Heart left ventricle (tissue), 16 donors: ENCODE measurements at regions of chr2 and their contacts with region 1.

Region 1: DNA sequence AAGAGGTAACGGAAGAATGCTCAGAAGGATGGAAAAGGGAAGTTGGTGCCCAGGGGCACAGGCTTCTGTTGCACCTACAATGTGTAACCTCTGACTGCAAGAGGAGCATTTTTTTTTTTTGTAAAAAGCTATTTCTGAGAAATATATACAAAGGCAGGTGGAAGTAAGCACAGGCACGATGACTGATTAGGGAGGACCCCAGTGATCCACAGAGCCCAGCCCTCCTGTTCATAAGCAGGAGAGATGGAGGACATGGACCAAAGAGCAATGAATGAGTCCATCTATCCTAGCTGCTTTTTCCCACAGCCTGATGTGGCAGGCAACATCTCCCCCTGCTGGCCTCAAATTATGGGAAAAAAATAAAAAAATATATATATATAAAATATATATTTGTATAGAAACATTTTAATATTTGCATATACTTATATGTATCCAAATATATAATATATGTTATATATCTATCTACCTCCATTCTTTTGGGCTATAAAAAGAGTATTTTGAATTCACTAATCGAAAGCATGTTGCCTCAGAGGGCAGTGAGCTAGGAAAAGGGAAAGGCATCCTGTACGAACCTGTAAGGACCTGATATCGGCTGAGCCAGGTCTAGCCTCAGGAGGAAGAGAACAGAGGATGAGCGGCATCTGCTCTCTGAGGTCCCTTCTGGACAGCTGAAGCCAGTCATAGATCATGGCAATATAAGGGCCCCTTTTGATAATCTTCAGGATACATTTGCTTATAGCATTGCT is 166.0 kb upstream of the STK17B start:
- DNase-seq: no peak
- ATAC-seq: peak in 1 of 4 donors; percentile 42
- H3K4me3 ChIP-seq: no peak overlapping the region
- H3K27ac ChIP-seq: no peak overlapping the region
- H3K4me1 ChIP-seq: peaks cover 0 to 50% (median 9%) of the 10 kb centered on the region in 12 donors
- H3K27me3 ChIP-seq: no peaks in the 10 kb centered on the region
- CTCF ChIP-seq: peak; percentile 17 to 62 (median 46)
- POLR2A ChIP-seq: no peak

Region 2: DNA sequence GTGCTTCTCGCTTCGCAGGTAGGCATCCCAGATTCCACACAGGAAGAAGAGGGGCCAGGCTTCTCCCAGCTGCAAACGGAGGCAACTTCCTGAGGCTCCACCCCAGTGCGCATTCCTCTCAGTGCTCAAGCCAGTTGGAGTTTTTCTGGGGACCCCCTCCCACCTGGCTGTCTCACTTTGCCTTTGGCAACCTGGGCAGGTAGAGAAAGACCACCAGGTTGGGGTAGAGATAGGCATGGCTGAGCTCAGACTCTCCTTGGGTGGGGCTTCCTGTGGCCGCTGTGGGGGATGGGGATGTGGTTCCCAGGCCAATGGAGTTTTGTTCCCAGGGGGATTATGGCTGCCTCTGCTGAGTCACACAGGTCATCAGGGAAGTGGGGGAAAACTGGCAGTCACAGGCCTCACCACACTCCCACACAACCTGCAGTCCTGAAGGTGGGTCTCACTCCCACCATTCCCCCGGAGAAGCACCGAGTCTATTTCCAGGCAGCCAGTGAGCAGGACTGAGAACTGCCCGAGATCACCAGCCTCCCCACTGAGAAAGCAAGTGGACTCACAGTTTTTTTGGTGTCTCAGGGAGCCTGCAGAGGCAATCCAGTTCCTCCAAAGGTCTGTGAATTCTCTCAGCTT is 642.3 kb before region 1 on chr2:
- intact Hi-C with region 1: no loop called
- DNase-seq: no peak
- ATAC-seq: no peak
- H3K4me3 ChIP-seq: no peak overlapping the region
- H3K27ac ChIP-seq: no peak overlapping the region
- H3K4me1 ChIP-seq: peaks cover 0 to 8% (median 0%) of the 10 kb centered on the region in 12 donors
- H3K27me3 ChIP-seq: no peaks in the 10 kb centered on the region
- CTCF ChIP-seq: no peak
- POLR2A ChIP-seq: no peak

Region 3: DNA sequence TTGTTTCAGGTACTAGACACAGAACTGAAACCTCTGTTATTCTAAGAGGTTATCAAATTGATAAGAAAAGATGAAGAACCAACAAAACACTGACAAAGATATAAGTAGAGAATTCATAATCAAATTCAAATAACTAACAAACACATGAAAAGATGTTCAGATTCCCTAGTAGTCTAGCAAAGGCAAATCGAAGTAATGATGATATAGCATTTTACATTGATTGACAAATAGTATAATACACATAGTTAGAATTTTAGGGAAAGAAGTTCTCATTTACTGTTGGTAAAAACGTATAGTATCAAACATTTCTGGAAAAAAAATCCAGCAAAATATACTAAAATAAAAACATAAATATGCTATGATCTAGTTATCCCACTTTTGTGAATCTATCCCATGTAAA is 319.3 kb before region 1 on chr2:
- intact Hi-C with region 1: no loop called
- DNase-seq: no peak
- ATAC-seq: no peak
- H3K4me3 ChIP-seq: no peak overlapping the region
- H3K27ac ChIP-seq: no peak overlapping the region
- H3K4me1 ChIP-seq: no peaks in the 10 kb centered on the region
- H3K27me3 ChIP-seq: no peaks in the 10 kb centered on the region
- CTCF ChIP-seq: no peak
- POLR2A ChIP-seq: no peak

Region 4: DNA sequence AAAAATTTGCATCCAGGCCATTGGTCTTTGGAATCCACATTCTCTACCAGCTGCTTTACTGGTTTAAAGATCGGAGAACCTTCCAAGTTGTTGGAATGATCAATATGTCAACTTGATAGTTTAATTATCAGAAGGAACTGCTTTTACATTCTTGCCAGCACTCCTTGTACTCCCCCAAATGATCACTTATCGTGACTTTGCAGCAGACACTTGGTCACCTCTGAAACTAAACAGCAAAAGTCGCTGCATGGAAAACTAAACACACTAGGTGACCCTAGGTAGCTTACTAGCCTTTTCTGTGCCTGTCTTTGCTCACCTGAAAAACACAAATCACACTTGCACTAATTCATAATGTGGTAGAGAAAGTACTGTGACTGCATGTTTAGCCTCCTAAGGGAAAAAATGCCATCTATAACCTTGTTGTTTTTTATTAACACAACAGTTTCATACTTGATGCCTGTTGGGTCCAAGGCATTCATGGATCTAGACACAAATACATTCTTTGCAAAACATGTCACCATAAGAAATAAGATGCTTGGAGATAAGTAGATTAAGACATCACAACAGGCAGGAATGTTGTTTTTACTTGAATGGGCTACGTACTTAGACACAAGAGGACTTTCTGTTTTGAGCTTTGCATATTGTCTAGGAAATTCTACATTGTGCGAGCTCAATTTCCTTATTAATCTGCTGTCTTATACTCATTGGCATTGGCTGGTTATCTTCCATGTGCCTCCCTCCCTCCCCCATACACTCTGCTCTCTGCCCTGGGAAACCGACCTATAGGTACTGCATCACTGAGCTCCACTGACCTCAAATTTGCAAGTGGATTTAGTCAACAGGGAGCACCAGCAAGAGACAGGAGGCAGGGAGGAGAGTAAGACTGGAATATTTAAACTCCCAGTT is 53.1 kb after region 1 on chr2:
- intact Hi-C with region 1: loop called in 1 of 10 experiments (anchors 5 kb)
- DNase-seq: no peak
- ATAC-seq: no peak
- H3K4me3 ChIP-seq: no peak overlapping the region
- H3K27ac ChIP-seq: no peak overlapping the region
- H3K4me1 ChIP-seq: peaks cover 0 to 12% (median 0%) of the 10 kb centered on the region in 12 donors
- H3K27me3 ChIP-seq: no peaks in the 10 kb centered on the region
- CTCF ChIP-seq: no peak
- POLR2A ChIP-seq: no peak

Region 5: GRCh38 chr2:196677406-196677805 is 340.0 kb after region 1 on chr2:
- intact Hi-C with region 1: no loop called
- DNase-seq: no peak
- ATAC-seq: no peak
- H3K4me3 ChIP-seq: no peak overlapping the region
- H3K27ac ChIP-seq: no peak overlapping the region
- H3K4me1 ChIP-seq: no peaks in the 10 kb centered on the region
- H3K27me3 ChIP-seq: no peaks in the 10 kb centered on the region
- CTCF ChIP-seq: no peak
- POLR2A ChIP-seq: no peak